PC-3 (cell line): ENCODE measurements at regions of chr3 and their contacts with region 1.

Region 1: GRCh38 chr3:5194341-5195159 is 7.0 kb downstream of the EDEM1 start:
- DNase-seq: peak; percentile 95
- ATAC-seq: peak; percentile 84
- H3K4me3 ChIP-seq: 0 out of 2 replicates have a peak overlapping the region, but pooled peaks have one; percentile 19
- H3K27ac ChIP-seq: peak overlapping the region; percentile 76
- H3K4me1 ChIP-seq: peaks cover 71% of the 10 kb centered on the region
- H3K27me3 ChIP-seq: no peaks in the 10 kb centered on the region
- CTCF ChIP-seq: no peak

Region 2: GRCh38 chr3:5122030-5122740 is 72.4 kb before region 1 on chr3 and contains the start of gene ARL8B:
- CTCF ChIA-PET with region 1: interaction called, 3 read pairs
- POLR2A ChIA-PET with region 1: no interaction called
- intact Hi-C with region 1: loop called (anchors 2 kb)
- DNase-seq: peak; percentile 94
- ATAC-seq: peak; percentile 86
- H3K4me3 ChIP-seq: peak within 1 kb of the TSS; percentile 93
- H3K27ac ChIP-seq: peak within 1 kb of the TSS; percentile 78
- H3K4me1 ChIP-seq: peaks cover 31% of the 10 kb centered on the region
- H3K27me3 ChIP-seq: no peaks in the 10 kb centered on the region
- CTCF ChIP-seq: peak; percentile 98
- total RNA-seq, gene ARL8B: 43.8 and 45.3 TPM in 2 replicates